ENCODE measurements at regions of chr12 and their contacts with region 1.

Region 1: DNA sequence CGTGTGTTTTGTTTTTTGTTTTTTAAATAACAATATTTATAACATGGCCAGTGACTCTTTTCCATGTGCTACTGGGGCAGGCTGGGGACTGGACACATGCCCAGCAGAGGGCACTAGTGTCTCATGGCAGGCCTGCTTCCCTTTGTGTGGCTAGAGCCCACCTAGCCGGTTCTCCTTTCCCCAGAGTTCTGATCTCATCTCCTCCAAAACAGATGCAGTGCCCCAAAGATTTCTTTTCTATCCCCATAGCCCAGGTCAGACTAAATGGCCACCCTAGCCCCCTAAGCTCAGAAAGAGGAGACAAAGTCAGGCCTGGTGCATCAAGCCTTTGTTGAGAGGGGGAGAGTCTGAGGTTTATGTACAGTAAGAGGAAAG is 21.2 kb downstream of the PRPF40B start:
- DNase-seq: peak; percentile 71 to 91 (median 87)
- ATAC-seq: peak; percentile 98
- H3K4me3 ChIP-seq: no peak overlapping the region
- H3K4me3 Mint-ChIP-seq: no peak overlapping the region
- H3K27ac ChIP-seq: peak overlapping the region in 1 of 2 experiments; percentile 57
- H3K27ac Mint-ChIP-seq: peak overlapping the region; percentile 92
- H3K4me1 ChIP-seq: peaks cover 12% of the 10 kb centered on the region
- H3K4me1 Mint-ChIP-seq: peaks cover 35% of the 10 kb centered on the region
- H3K27me3 ChIP-seq: no peaks in the 10 kb centered on the region
- H3K27me3 Mint-ChIP-seq: no peaks in the 10 kb centered on the region
- CTCF ChIP-seq: peak; percentile 93

Region 2: DNA sequence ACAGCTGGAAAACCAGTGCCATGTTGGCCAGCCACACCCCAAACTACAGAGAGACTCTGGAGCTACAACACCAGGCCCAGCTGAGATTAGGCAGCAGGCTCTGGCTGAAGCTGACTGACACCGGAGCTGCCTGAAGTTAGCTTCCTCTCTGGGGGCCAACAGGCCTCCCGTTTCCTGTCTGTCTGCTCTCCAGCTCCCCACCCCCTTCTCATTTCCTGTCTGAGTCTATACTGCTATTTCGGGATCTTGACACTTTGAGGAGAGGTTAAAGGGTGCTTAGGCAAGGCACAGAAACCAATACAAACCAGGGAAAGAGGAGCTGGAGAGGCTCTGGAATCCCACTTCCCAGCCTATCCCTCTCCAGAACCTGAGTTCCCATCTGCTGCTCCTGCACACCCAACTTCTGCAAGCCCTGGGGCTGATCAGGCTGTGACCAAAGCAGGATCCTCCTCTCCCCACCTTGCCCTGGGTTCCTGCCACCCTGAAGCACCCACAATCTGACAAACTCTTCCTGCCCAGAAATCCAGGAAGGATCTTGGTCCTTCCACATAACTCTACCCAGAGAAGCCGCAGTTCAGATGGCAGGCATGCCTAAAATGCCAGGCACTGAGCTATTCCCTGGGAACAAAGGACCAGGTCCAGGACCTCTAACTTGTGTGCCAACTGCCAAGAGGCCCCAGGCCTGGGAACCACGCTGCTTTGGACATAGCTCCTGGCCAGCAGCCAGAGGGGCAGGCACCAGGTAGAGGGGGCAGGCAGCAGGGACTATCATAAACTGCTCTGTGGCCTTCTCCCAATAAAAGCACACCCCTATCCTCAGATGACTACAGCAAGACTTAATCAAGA is 18.6 kb after region 1 on chr12:
- CTCF ChIA-PET with region 1: interaction called, 48 read pairs
- POLR2A ChIA-PET with region 1: interaction called, 6 read pairs
- intact Hi-C with region 1: loop called (anchors 1 to 2 kb)
- DNase-seq: peak; percentile 47 to 92 (median 80)
- ATAC-seq: peak; percentile 98
- H3K4me3 ChIP-seq: peak overlapping the region; percentile 27 to 42
- H3K4me3 Mint-ChIP-seq: peak overlapping the region; percentile 83
- H3K27ac ChIP-seq: peak overlapping the region; percentile 61 to 93
- H3K27ac Mint-ChIP-seq: peak overlapping the region; percentile 99
- H3K4me1 ChIP-seq: peaks cover 59% of the 10 kb centered on the region
- H3K4me1 Mint-ChIP-seq: peaks cover 83% of the 10 kb centered on the region
- H3K27me3 ChIP-seq: no peaks in the 10 kb centered on the region
- H3K27me3 Mint-ChIP-seq: no peaks in the 10 kb centered on the region
- CTCF ChIP-seq: no peak

Region 3: DNA sequence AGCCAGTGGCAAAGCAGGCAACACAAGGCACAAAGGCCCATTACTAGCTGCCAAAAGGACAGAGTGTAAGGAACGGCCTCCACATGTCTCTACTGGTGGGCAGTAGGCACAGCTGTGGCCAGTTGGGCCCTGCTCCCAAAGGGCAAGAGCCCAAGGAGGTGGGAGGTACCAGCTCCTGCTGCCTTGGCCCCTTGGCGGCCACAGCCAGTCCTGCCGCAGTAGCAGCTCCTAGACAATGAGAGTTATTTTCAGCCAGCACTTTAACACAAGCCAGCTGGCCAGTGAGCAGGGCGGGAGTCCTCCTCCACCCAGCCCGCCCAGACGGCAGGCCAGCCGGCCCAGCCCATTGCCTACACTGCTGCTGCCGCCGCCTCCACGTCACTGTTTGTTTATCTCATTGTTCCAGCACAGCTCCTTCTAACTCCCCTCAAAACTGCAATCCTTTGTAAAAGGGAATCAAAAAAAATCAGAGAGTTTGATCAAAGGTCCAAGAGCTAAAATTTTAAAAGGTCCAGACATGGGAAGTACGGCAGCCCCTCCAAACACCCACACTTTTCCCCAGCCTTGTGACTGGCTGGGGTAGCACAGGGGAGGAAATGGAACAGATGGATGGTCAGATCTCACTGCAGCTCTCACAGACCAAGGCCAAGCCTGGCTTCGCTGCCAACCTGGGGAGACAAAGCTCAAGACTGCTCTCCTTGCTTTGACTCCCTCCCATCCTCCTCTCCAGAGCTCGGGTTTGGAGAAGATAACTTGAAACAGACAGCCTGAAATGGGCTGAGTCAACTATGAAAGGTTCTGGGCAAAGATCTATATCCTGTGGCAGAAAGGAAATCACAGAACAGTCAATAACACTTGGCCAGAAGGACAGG is 29.1 kb after region 1 on chr12:
- CTCF ChIA-PET with region 1: interaction called, 17 read pairs
- POLR2A ChIA-PET with region 1: interaction called, 11 read pairs
- intact Hi-C with region 1: loop called in 1 of 2 experiments (anchors 2 kb)
- DNase-seq: peak in 3 of 9 experiments; percentile 18 to 30 (median 26)
- ATAC-seq: no peak
- H3K4me3 ChIP-seq: no peak overlapping the region
- H3K4me3 Mint-ChIP-seq: peak overlapping the region; percentile 26
- H3K27ac ChIP-seq: peak overlapping the region in 1 of 2 experiments; percentile 92
- H3K27ac Mint-ChIP-seq: peak overlapping the region; percentile 98
- H3K4me1 ChIP-seq: peaks cover 66% of the 10 kb centered on the region
- H3K4me1 Mint-ChIP-seq: peaks cover 84% of the 10 kb centered on the region
- H3K27me3 ChIP-seq: no peaks in the 10 kb centered on the region
- H3K27me3 Mint-ChIP-seq: no peaks in the 10 kb centered on the region
- CTCF ChIP-seq: no peak

Region 4: DNA sequence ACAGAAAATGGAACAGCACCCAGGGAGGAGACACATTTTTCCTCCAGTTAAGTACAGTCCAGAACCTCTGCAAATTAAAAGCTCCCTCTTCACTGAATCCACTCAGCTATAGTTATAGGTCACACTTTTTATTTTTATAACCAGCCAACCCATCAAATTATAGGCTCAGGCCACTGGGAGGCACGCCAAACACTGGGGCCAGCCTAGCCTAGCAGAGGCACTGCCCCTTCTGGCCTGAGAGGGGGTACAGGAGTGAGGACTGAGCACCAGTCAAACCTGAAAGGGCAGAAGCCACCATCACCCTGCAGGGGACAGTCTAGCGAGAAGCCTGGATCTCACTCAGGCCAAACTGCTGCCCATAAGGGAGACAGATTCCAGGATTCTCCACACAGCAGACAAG is 43.3 kb after region 1 on chr12:
- CTCF ChIA-PET with region 1: interaction called, 18 read pairs
- POLR2A ChIA-PET with region 1: no interaction called
- intact Hi-C with region 1: no loop called
- DNase-seq: no peak
- ATAC-seq: no peak
- H3K4me3 ChIP-seq: no peak overlapping the region
- H3K4me3 Mint-ChIP-seq: no peak overlapping the region
- H3K27ac ChIP-seq: no peak overlapping the region
- H3K27ac Mint-ChIP-seq: no peak overlapping the region
- H3K4me1 ChIP-seq: peaks cover 20% of the 10 kb centered on the region
- H3K4me1 Mint-ChIP-seq: peaks cover 61% of the 10 kb centered on the region
- H3K27me3 ChIP-seq: no peaks in the 10 kb centered on the region
- H3K27me3 Mint-ChIP-seq: no peaks in the 10 kb centered on the region
- CTCF ChIP-seq: no peak

Region 5: DNA sequence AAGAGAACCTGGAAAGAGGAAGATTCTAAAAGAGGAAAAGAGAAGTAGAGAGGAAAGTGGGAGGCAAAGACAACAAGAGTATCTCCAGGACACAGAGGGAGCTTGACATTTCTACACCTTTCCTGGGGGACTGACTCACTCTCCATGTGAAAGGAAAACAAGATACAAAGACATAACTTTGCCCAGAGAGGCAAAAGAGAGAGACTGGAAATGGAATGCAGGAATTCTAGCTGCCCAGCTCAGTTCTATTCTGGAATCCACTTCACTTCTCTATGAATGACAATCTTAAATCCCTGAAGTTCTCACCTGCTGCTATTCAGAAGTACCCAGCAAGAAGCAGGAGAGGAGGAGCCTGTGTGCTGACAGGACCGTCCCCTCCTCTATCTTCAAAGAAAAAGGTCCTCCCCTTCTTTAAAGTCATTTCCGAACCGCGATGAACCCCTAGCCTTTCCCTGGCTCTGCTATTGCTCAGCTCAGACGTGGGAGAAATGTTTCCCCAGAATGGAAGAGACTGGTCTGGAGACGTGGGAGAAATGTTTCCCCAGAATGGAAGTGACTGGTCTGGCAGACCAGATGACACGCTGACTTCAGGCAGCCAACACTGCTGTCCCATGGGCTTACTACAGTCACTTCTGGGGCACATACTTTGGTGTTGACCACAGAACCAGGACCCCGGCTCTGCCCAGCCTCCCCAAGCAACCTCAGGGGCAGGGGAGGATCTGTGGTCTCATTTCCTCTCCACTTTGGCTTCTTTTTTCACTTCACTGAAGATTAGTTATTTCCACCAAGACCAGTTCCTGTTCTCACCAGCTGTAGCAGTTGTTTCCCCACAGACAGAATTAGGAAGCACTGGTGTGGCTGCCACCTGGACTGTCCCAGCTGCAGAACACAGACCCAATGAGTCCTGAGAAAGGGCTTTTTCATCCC is 54.3 kb after region 1 on chr12:
- CTCF ChIA-PET with region 1: interaction called, 493 read pairs
- POLR2A ChIA-PET with region 1: interaction called, 3 read pairs
- intact Hi-C with region 1: no loop called
- DNase-seq: peak in 6 of 9 experiments; percentile 16 to 69 (median 46)
- ATAC-seq: peak; percentile 74
- H3K4me3 ChIP-seq: peak overlapping the region; percentile 15 to 42
- H3K4me3 Mint-ChIP-seq: peak overlapping the region; percentile 84
- H3K27ac ChIP-seq: peak overlapping the region in 1 of 2 experiments; percentile 56
- H3K27ac Mint-ChIP-seq: peak overlapping the region; percentile 87
- H3K4me1 ChIP-seq: peaks cover 29% of the 10 kb centered on the region
- H3K4me1 Mint-ChIP-seq: peaks cover 64% of the 10 kb centered on the region
- H3K27me3 ChIP-seq: no peaks in the 10 kb centered on the region
- H3K27me3 Mint-ChIP-seq: no peaks in the 10 kb centered on the region
- CTCF ChIP-seq: no peak

Region 6: GRCh38 chr12:49828133-49829091 is 183.8 kb after region 1 on chr12 and contains the start of gene NCKAP5L:
- CTCF ChIA-PET with region 1: no interaction called
- POLR2A ChIA-PET with region 1: no interaction called
- intact Hi-C with region 1: loop called in 1 of 2 experiments (anchors 5 kb)
- DNase-seq: peak; percentile 86 to 96 (median 94)
- ATAC-seq: peak; percentile 97
- H3K4me3 ChIP-seq: peak within 1 kb of the TSS; percentile 68 to 91
- H3K4me3 Mint-ChIP-seq: peak within 1 kb of the TSS; percentile 97
- H3K27ac ChIP-seq: peak within 1 kb of the TSS; percentile 65 to 69
- H3K27ac Mint-ChIP-seq: peak within 1 kb of the TSS; percentile 97
- H3K4me1 ChIP-seq: peaks cover 15% of the 10 kb centered on the region
- H3K4me1 Mint-ChIP-seq: peaks cover 39% of the 10 kb centered on the region
- H3K27me3 ChIP-seq: no peaks in the 10 kb centered on the region
- H3K27me3 Mint-ChIP-seq: no peaks in the 10 kb centered on the region
- CTCF ChIP-seq: no peak
- total RNA-seq, gene NCKAP5L: 10.6 to 10.7 TPM

Measured in CD8-positive, alpha-beta T cell (primary cell).